Endothelial cell of umbilical vein (primary cell): ENCODE measurements at regions of chr11 and their contacts with region 1.

Region 1: DNA sequence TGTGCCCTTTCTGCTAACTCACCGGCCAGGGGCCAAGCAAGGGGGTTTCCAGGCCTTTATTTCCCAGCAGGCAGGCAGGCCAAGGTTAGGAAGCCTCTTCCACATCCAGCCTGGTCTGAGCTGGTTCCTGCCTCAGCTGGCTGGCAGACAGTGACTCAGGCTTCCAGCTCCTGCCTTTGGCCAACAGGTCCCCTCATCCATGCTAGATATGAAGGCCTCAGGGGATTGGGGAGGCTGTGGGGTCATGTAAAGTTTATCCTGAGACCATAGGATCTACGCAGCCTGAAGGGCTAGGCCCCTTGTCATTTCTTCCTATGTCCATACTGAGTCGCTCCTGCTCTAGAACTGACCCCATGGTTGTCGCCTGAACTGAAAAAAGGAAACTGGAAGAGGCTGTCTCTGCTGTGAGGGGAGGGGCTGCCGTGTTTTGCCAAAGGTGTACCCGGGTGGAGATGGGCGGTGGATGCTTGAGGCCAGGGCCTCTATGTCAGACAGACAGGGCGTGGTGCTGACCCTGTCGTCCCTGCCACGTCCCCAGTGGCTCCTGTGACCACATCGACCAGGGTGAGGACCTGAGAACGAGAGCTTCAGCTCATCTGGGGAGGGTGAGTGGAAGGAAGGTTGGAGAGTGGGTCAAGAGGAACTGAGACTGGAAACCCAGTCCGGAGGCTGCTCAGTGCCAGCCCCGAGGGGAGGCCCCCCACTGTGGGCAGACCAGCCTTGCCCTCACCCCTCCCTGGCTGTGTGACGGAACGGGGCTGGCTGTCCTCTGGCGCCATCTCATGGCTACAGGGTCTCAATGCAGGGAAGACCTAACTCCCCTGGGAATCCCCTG is 17.0 kb downstream of the P2RY6 start:
- DNase-seq: peak; percentile 86
- H3K4me3 ChIP-seq: no peak overlapping the region
- H3K27ac ChIP-seq: peak overlapping the region; percentile 71
- H3K4me1 ChIP-seq: peaks cover 17% of the 10 kb centered on the region
- H3K27me3 ChIP-seq: no peaks in the 10 kb centered on the region
- CTCF ChIP-seq: peak; percentile 95
- POLR2A ChIP-seq: no peak

Region 2: GRCh38 chr11:73218106-73218829 is 70.8 kb before region 1 on chr11 and contains the start of gene P2RY2:
- CTCF ChIA-PET with region 1: interaction called, 8 read pairs
- POLR2A ChIA-PET with region 1: no interaction called
- dilution Hi-C with region 1: no loop called
- intact Hi-C with region 1: loop called (anchors 1 kb)
- DNase-seq: peak; percentile 59
- H3K4me3 ChIP-seq: peak within 1 kb of the TSS in 2 of 3 experiments; percentile 0 to 30
- H3K27ac ChIP-seq: no peak within 1 kb of the TSS
- H3K4me1 ChIP-seq: no peaks in the 10 kb centered on the region
- H3K27me3 ChIP-seq: no peaks in the 10 kb centered on the region
- CTCF ChIP-seq: peak; percentile 58 to 75
- POLR2A ChIP-seq: no peak
- total RNA-seq, gene P2RY2: 4.4 and 5.6 TPM in 2 replicates

Region 3: GRCh38 chr11:73242251-73243079 is 46.6 kb before region 1 on chr11:
- CTCF ChIA-PET with region 1: interaction called, 21 read pairs
- POLR2A ChIA-PET with region 1: no interaction called
- dilution Hi-C with region 1: no loop called
- intact Hi-C with region 1: loop called (anchors 1 kb)
- DNase-seq: peak; percentile 84
- H3K4me3 ChIP-seq: no peak overlapping the region
- H3K27ac ChIP-seq: no peak overlapping the region
- H3K4me1 ChIP-seq: peaks cover 11% of the 10 kb centered on the region
- H3K27me3 ChIP-seq: no peaks in the 10 kb centered on the region
- CTCF ChIP-seq: peak; percentile 88 to 89
- POLR2A ChIP-seq: no peak

Region 4: GRCh38 chr11:73270016-73270854 is 18.9 kb before region 1 on chr11:
- CTCF ChIA-PET with region 1: interaction called, 10 read pairs
- POLR2A ChIA-PET with region 1: no interaction called
- dilution Hi-C with region 1: no loop called
- intact Hi-C with region 1: no loop called
- DNase-seq: no peak
- H3K4me3 ChIP-seq: no peak overlapping the region
- H3K27ac ChIP-seq: no peak overlapping the region
- H3K4me1 ChIP-seq: no peaks in the 10 kb centered on the region
- H3K27me3 ChIP-seq: peaks cover 0 to 15% of the 10 kb centered on the region in 2 experiments
- CTCF ChIP-seq: no peak
- POLR2A ChIP-seq: no peak

Region 5: DNA sequence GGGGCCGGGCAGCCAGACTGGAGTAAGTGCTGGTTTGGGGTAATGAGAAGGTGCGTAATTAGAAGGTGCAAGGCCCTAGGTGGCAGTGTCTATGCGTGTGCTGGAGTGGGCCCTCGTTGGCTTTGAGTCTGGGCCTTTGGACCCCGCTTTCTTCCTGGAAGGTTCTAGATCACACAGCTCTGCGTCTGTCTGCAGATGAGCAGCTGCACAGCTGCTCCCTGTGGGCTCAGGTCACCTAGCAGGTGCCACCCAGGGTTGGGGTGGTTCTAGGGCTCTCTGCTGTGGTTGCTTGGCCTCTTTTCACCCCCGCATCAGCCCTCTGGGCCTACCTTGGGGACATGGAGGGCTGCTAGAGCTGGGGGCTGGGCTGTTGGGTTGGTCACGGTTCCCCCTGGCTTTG is 97.5 kb after region 1 on chr11:
- CTCF ChIA-PET with region 1: no interaction called
- POLR2A ChIA-PET with region 1: no interaction called
- dilution Hi-C with region 1: no loop called
- intact Hi-C with region 1: no loop called
- DNase-seq: no peak
- H3K4me3 ChIP-seq: no peak overlapping the region
- H3K27ac ChIP-seq: no peak overlapping the region
- H3K4me1 ChIP-seq: peaks cover 25% of the 10 kb centered on the region
- H3K27me3 ChIP-seq: no peaks in the 10 kb centered on the region
- CTCF ChIP-seq: no peak
- POLR2A ChIP-seq: no peak